Naive thymus-derived CD4-positive, alpha-beta T cell (primary cell): ENCODE measurements at regions of chr19 and their contacts with region 1.

Region 1: GRCh38 chr19:19663256-19664038 is at the start of gene ATP13A1:
- DNase-seq: peak; percentile 83 to 96 (median 93)
- ATAC-seq: peak; percentile 85
- H3K4me3 ChIP-seq: peak within 1 kb of the TSS; percentile 96
- H3K4me3 Mint-ChIP-seq: peak within 1 kb of the TSS; percentile 79 to 99 (median 96)
- H3K27ac ChIP-seq: peak within 1 kb of the TSS; percentile 98
- H3K27ac Mint-ChIP-seq: peak within 1 kb of the TSS; percentile 93 to 99 (median 99)
- H3K4me1 ChIP-seq: peaks cover 30 to 32% of the 10 kb centered on the region in 2 donors
- H3K4me1 Mint-ChIP-seq: peaks cover 20 to 44% (median 36%) of the 10 kb centered on the region in 7 donors
- H3K27me3 ChIP-seq: no peaks in the 10 kb centered on the region
- H3K27me3 Mint-ChIP-seq: peaks cover 0 to 3% (median 0%) of the 10 kb centered on the region in 5 donors
- total RNA-seq, gene ATP13A1: 86.5 to 138 (median 98.9) TPM

Region 2: GRCh38 chr19:19320362-19321142 is 342.9 kb before region 1 on chr19 and contains the starts of genes MAU2 and SUGP1:
- CTCF ChIA-PET with region 1: no interaction called
- POLR2A ChIA-PET with region 1: no interaction called
- intact Hi-C with region 1: loop called in 1 of 2 experiments (anchors 1 kb)
- DNase-seq: peak; percentile 78 to 94 (median 91)
- ATAC-seq: peak; percentile 94
- H3K4me3 ChIP-seq: peak within 1 kb of the TSS; percentile 89
- H3K4me3 Mint-ChIP-seq: peak within 1 kb of the TSS; percentile 93 to 100 (median 98)
- H3K27ac ChIP-seq: peak within 1 kb of the TSS; percentile 95
- H3K27ac Mint-ChIP-seq: peak within 1 kb of the TSS; percentile 96 to 100 (median 99)
- H3K4me1 ChIP-seq: peaks cover 23 to 30% of the 10 kb centered on the region in 2 donors
- H3K4me1 Mint-ChIP-seq: peaks cover 20 to 66% (median 44%) of the 10 kb centered on the region in 7 donors
- H3K27me3 ChIP-seq: no peaks in the 10 kb centered on the region
- H3K27me3 Mint-ChIP-seq: no peaks in the 10 kb centered on the region
- total RNA-seq, gene MAU2: 93.7 to 170 (median 136) TPM
- total RNA-seq, gene SUGP1: 59.7 to 96.6 (median 77.5) TPM

Region 3: DNA sequence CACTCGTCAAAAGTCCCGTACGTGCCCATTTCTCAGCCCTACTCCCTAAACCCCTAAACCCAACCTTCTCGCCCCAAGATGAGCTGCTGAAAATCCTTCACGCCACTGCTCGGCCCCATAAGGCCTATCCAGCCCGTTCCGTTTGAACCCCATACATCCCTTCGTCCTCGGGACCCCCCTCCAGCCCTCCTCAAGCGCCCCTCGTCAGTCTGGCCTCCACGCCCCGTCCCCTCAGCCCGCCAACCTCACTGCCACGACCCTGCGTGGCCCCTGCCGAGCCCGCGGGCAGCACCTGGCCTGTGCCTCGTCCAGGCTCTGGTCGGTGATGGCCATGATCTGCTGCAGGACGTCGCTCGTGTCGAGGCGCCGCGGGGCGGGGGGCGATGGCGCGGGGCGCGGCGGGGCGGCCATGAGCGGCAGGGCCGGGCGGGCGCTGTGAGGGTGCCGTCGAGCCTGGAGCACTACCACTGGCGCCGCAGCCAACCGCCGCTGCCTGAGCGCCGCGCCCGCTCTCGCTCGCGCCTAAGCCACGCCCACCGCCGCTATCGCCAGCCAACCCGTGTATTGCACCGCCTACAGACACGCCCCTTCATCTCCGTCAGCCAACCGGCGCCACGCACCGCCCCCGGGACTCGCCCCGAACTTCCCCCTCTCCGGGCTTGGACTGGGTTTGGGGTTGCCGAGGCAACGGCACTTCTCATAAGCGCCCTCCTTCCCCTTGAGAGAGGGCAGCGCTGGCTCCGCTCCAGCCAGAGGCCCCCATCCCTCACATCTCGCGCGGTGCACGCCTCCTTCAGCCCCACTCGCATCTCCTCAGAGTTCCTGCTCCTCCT is 45.0 kb before region 1 on chr19 and contains the start of gene PBX4:
- CTCF ChIA-PET with region 1: interaction called, 3 read pairs
- POLR2A ChIA-PET with region 1: interaction called, 6 read pairs
- intact Hi-C with region 1: loop called (anchors 1 to 2 kb)
- DNase-seq: peak; percentile 97 to 99 (median 99)
- ATAC-seq: peak; percentile 99
- H3K4me3 ChIP-seq: peak within 1 kb of the TSS; percentile 86
- H3K4me3 Mint-ChIP-seq: peak within 1 kb of the TSS; percentile 79 to 99 (median 90)
- H3K27ac ChIP-seq: peak within 1 kb of the TSS; percentile 82
- H3K27ac Mint-ChIP-seq: peak within 1 kb of the TSS; percentile 80 to 98 (median 94)
- H3K4me1 ChIP-seq: peaks cover 16 to 23% of the 10 kb centered on the region in 2 donors
- H3K4me1 Mint-ChIP-seq: peaks cover 34 to 50% (median 45%) of the 10 kb centered on the region in 7 donors
- H3K27me3 ChIP-seq: no peaks in the 10 kb centered on the region
- H3K27me3 Mint-ChIP-seq: no peaks in the 10 kb centered on the region
- total RNA-seq, gene PBX4: 22.6 to 42.7 (median 42.0) TPM

Region 4: DNA sequence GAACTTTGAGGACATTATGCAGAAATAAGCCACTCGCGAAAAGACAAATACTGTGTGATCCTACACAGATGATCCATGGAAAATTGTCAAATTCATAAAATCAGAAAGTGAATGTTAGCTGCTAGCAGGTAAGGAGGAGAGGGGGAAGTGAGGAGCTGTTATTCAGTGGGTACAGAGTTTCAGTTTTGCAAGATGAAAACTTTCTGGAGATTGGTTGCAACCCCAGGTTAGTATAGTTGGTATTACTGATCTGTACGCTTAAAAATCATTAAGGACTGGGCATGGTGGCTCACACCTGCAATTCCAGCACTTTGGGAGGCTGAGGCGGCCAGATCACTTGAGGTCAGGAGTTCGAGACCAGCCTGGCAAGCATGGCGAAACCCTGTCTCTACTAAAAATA is 23.1 kb after region 1 on chr19:
- CTCF ChIA-PET with region 1: no interaction called
- POLR2A ChIA-PET with region 1: interaction called, 74 read pairs
- intact Hi-C with region 1: loop called in 1 of 2 experiments (anchors 2 kb)
- DNase-seq: peak in 1 of 9 donors; percentile 34
- ATAC-seq: no peak
- H3K4me3 ChIP-seq: no peak overlapping the region
- H3K4me3 Mint-ChIP-seq: no peak overlapping the region
- H3K27ac ChIP-seq: no peak overlapping the region
- H3K27ac Mint-ChIP-seq: no peak overlapping the region
- H3K4me1 ChIP-seq: no peaks in the 10 kb centered on the region
- H3K4me1 Mint-ChIP-seq: peaks cover 0 to 4% (median 0%) of the 10 kb centered on the region in 7 donors
- H3K27me3 ChIP-seq: no peaks in the 10 kb centered on the region
- H3K27me3 Mint-ChIP-seq: no peaks in the 10 kb centered on the region

Region 5: DNA sequence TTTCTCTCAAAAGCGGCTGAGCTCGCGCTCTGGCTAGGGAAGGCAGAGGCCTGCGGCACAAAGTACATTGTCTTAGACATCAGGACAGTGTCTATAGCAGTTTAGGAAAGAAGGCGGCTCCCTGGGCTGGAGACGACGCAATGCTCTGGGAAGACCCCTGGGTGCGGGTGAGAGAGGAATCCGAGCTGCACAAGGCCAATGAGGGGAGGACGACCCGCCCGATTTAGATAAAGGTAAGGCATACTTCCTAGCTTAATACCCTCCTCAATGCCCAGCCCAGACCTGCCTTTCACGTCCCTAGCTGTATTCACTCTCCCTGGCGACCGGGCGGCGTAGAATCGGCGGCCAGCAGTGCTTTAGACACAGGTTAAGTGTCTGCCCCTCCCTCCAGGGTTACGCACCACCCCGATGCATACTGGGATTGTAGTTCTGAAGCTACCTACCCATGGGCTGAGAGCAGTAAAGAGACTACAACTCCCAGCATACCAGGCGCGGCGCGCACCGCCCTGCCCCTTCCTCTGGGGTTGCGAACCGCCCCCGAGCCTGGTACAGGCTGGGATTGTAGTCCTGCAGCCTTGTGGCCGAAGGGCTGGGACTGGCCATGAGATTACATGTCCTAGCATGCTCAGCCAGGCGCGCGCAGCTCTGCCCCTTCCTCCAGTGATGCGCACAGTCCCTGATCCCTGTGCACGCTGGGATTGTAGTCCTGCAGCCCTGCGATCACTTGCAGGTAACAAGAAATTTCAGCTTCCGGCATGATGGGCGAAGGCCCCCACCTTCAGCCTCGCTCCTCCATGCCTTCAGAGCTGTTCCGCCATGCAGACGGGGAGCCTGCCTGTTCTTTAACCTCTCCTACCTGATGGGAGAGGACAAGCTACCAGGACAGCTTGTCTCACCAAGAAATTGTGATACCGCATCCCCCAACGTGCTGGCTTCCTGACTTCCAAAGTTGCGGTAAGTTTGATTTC is 112.9 kb after region 1 on chr19:
- CTCF ChIA-PET with region 1: no interaction called
- POLR2A ChIA-PET with region 1: interaction called, 46 read pairs
- intact Hi-C with region 1: loop called (anchors 1 kb)
- DNase-seq: peak; percentile 79 to 95 (median 91)
- ATAC-seq: peak; percentile 100
- H3K4me3 ChIP-seq: peak overlapping the region; percentile 91
- H3K4me3 Mint-ChIP-seq: peak overlapping the region; percentile 91 to 100 (median 98)
- H3K27ac ChIP-seq: peak overlapping the region; percentile 84
- H3K27ac Mint-ChIP-seq: peak overlapping the region; percentile 88 to 99 (median 97)
- H3K4me1 ChIP-seq: peaks cover 11 to 20% of the 10 kb centered on the region in 2 donors
- H3K4me1 Mint-ChIP-seq: peaks cover 25 to 67% (median 54%) of the 10 kb centered on the region in 7 donors
- H3K27me3 ChIP-seq: no peaks in the 10 kb centered on the region
- H3K27me3 Mint-ChIP-seq: no peaks in the 10 kb centered on the region

Region 6: GRCh38 chr19:19956434-19957075 is 293.1 kb after region 1 on chr19:
- CTCF ChIA-PET with region 1: no interaction called
- POLR2A ChIA-PET with region 1: no interaction called
- intact Hi-C with region 1: loop called in 1 of 2 experiments (anchors 1 kb)
- DNase-seq: no peak
- ATAC-seq: no peak
- H3K4me3 ChIP-seq: no peak overlapping the region
- H3K4me3 Mint-ChIP-seq: no peak overlapping the region
- H3K27ac ChIP-seq: no peak overlapping the region
- H3K27ac Mint-ChIP-seq: no peak overlapping the region
- H3K4me1 ChIP-seq: no peaks in the 10 kb centered on the region
- H3K4me1 Mint-ChIP-seq: peaks cover 0 to 8% (median 5%) of the 10 kb centered on the region in 7 donors
- H3K27me3 ChIP-seq: no peaks in the 10 kb centered on the region
- H3K27me3 Mint-ChIP-seq: no peaks in the 10 kb centered on the region

Region 7: GRCh38 chr19:21020298-21021227 is 1357.1 kb after region 1 on chr19 and contains the start of gene ZNF430:
- CTCF ChIA-PET with region 1: no interaction called
- POLR2A ChIA-PET with region 1: no interaction called
- intact Hi-C with region 1: loop called (anchors 2 to 5 kb)
- DNase-seq: peak; percentile 75 to 95 (median 93)
- ATAC-seq: peak; percentile 98
- H3K4me3 ChIP-seq: peak within 1 kb of the TSS; percentile 95
- H3K4me3 Mint-ChIP-seq: peak within 1 kb of the TSS; percentile 99 to 100 (median 100)
- H3K27ac ChIP-seq: peak within 1 kb of the TSS; percentile 97
- H3K27ac Mint-ChIP-seq: peak within 1 kb of the TSS; percentile 99 to 100 (median 100)
- H3K4me1 ChIP-seq: peaks cover 14 to 20% of the 10 kb centered on the region in 2 donors
- H3K4me1 Mint-ChIP-seq: peaks cover 32 to 56% (median 52%) of the 10 kb centered on the region in 7 donors
- H3K27me3 ChIP-seq: no peaks in the 10 kb centered on the region
- H3K27me3 Mint-ChIP-seq: no peaks in the 10 kb centered on the region
- total RNA-seq, gene ZNF430: 26.4 to 52.0 (median 42.2) TPM